Activated naive CD4-positive, alpha-beta T cell treated with anti-CD3 and anti-CD28 coated beads for 36 hours (primary cell): ENCODE measurements at regions of chr17 and their contacts with region 1.

Region 1: GRCh38 chr17:74176546-74177001 is 26.9 kb upstream of the RPL38 start:
- DNase-seq: peak; percentile 67
- H3K4me3 Mint-ChIP-seq: no peak overlapping the region
- H3K27ac Mint-ChIP-seq: no peak overlapping the region
- H3K4me1 Mint-ChIP-seq: no peaks in the 10 kb centered on the region
- H3K27me3 Mint-ChIP-seq: peaks cover 13% of the 10 kb centered on the region

Region 2: DNA sequence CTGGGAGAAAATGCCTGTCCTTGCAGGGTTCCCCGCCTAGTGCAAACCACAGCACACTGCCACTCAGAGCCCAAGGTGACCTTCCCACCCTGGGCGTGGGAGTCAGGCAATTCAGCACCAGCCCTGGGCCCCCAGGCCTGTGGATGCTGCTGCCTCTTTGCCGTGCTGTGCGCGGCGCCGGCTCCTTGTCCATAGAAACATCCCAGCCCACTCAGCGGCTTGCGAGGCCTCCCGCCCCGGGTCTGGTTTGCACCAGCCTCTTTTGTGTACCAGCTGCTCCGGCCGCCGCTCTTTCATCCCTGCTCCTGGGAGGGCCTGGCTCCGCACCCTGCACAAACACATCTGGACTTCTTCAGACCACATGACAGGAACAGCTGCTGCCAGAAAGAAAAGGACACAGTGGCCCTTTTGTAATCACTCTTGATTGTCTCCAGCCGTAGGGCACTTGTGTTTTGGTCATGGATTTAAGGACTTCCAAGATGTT is 456.9 kb before region 1 on chr17:
- CTCF ChIA-PET with region 1: no interaction called
- intact Hi-C with region 1: loop called (anchors 2 kb)
- DNase-seq: no peak
- H3K4me3 Mint-ChIP-seq: no peak overlapping the region
- H3K27ac Mint-ChIP-seq: no peak overlapping the region
- H3K4me1 Mint-ChIP-seq: peaks cover 42% of the 10 kb centered on the region
- H3K27me3 Mint-ChIP-seq: no peaks in the 10 kb centered on the region

Region 3: DNA sequence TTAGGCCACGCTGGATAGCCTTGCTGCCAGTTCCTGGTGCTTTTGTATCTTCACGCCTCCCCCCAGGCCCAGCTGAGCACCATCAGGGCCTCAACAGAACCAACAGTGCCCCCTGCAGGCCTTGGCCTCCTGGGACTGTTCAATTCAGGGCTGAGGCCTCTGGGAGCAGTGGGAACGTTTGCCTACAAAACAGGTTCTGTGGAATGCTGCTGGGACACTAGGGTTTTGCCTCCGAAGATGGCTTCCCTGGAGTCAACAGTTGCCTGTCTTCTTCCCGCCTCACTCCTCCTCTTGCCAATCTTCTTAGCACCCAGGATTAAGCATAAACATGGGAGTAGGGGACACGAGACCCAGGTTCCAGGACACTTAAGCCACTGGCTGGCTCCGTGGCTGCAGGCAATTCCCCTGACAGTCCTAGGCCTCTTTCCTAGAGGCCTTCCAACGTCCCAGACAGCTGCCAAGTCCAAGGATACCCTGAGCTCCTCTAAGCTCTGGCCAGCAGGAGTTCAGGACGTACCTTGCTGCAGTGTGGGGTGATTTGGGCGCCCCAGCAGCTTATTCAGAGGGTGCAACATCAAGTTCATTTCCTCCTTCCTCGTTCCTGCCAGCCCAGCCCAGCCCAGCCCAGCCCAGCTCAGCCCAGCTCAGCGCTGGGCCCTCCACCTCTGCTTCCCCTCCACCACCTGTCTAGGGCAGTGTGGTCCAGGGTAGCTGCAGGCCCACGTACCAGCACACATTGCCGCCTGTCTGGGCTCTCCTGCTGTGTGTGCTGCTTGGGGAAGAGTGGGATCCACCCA is 219.7 kb before region 1 on chr17:
- CTCF ChIA-PET with region 1: no interaction called
- intact Hi-C with region 1: loop called (anchors 5 kb)
- DNase-seq: peak; percentile 67
- H3K4me3 Mint-ChIP-seq: no peak overlapping the region
- H3K27ac Mint-ChIP-seq: no peak overlapping the region
- H3K4me1 Mint-ChIP-seq: peaks cover 3% of the 10 kb centered on the region
- H3K27me3 Mint-ChIP-seq: peaks cover 3% of the 10 kb centered on the region

Region 4: DNA sequence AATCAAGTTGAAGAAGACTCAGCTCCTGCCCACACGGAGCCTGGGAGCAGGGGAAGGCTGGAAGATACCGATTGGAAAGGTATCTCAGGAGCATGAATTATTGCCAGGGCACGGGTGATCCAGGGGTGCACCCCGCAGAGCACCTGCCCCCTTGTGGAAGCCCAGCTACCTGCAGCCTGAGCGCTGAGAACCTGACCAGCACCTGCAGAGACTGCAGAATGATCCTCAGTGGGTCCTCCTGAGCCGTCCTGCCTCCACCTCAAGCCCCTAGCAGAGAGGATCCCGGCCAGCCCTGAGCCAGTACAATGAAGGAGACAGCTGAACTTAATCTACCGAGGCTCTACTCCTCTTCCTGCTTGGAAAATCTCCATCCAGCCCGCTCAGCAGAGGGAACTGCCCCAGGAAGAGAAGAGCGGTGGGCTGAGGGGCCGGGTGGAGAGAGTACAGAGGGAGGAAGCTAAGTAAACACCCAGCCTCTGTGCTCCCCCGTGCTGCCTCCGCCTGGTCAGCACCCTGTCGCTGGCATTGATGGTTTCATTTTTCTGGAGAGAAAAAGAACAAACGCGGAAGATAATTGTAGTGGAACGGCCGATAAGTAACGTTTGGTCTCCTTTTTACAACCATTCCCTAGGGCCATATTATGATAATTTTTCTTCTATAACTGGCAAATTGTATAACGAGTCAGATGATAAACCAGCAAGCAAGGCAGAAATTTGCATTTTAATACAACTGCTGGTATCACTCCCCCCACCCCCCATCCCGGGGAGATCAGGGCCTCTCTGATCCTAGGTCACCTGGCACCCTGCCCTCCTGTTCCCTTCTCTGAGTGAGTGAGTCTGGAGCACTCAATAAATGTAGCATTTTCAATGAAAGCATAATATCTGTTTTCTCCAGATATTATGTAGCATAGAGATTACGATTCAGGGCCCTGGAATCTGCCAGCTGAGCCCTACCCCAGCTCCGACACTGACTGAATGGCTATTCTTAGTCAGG is 177.6 kb before region 1 on chr17:
- CTCF ChIA-PET with region 1: interaction called, 3 read pairs
- intact Hi-C with region 1: loop called (anchors 10 kb)
- DNase-seq: peak; percentile 79
- H3K4me3 Mint-ChIP-seq: no peak overlapping the region
- H3K27ac Mint-ChIP-seq: no peak overlapping the region
- H3K4me1 Mint-ChIP-seq: no peaks in the 10 kb centered on the region
- H3K27me3 Mint-ChIP-seq: peaks cover 4% of the 10 kb centered on the region

Region 5: GRCh38 chr17:74089869-74090464 is 86.6 kb before region 1 on chr17:
- CTCF ChIA-PET with region 1: interaction called, 6 read pairs
- intact Hi-C with region 1: loop called (anchors 1 kb)
- DNase-seq: peak; percentile 79
- H3K4me3 Mint-ChIP-seq: no peak overlapping the region
- H3K27ac Mint-ChIP-seq: no peak overlapping the region
- H3K4me1 Mint-ChIP-seq: no peaks in the 10 kb centered on the region
- H3K27me3 Mint-ChIP-seq: peaks cover 3% of the 10 kb centered on the region